ENCODE measurements at regions of chr7 and their contacts with region 1.

Region 1: GRCh38 chr7:66591799-66592596 is 36.7 kb upstream of the KCTD7 start:
- DNase-seq: peak; percentile 86
- H3K4me3 ChIP-seq: peak overlapping the region; percentile 59 to 90 (median 79)
- H3K27ac ChIP-seq: peak overlapping the region; percentile 83
- H3K4me1 ChIP-seq: no peaks in the 10 kb centered on the region
- H3K27me3 ChIP-seq: no peaks in the 10 kb centered on the region
- CTCF ChIP-seq: no peak
- POLR2A ChIP-seq: peak; percentile 90

Region 2: DNA sequence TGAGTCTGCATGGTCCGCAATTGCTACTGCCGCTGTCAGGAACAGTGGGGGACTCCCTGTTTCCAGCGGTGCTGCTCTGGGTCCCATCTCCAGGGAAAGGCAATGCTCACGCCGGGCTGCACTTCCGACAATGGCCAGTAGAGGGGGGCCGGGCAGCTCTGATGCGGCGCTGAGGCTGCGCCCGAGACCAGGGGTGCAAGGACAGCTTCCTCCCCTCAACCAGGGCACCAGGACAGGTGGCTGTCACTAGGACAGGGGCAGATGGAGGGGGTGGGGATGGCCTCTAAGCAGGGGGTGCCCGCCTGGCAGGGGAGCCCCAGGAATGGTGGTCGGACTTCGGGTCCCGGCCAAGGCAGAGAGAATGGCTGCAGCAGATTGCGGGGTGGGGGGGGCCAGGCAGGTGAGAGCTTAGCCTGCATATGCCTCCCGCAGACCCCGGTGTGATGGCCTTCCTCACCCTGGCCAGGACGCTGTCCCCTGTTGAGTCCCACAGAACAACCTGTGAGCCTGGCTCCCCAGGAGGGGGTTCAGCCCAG is 34.3 kb before region 1 on chr7:
- CTCF ChIA-PET with region 1: no interaction called
- POLR2A ChIA-PET with region 1: no interaction called
- dilution Hi-C with region 1: no loop called
- intact Hi-C with region 1: no loop called
- DNase-seq: peak; percentile 32
- H3K4me3 ChIP-seq: no peak overlapping the region
- H3K27ac ChIP-seq: no peak overlapping the region
- H3K4me1 ChIP-seq: no peaks in the 10 kb centered on the region
- H3K27me3 ChIP-seq: no peaks in the 10 kb centered on the region
- CTCF ChIP-seq: peak; percentile 82 to 96
- POLR2A ChIP-seq: no peak

Region 3: GRCh38 chr7:66576646-66577045 is 15.4 kb before region 1 on chr7:
- CTCF ChIA-PET with region 1: no interaction called
- POLR2A ChIA-PET with region 1: no interaction called
- dilution Hi-C with region 1: no loop called
- intact Hi-C with region 1: no loop called
- DNase-seq: no peak
- H3K4me3 ChIP-seq: no peak overlapping the region
- H3K27ac ChIP-seq: no peak overlapping the region
- H3K4me1 ChIP-seq: no peaks in the 10 kb centered on the region
- H3K27me3 ChIP-seq: no peaks in the 10 kb centered on the region
- CTCF ChIP-seq: no peak
- POLR2A ChIP-seq: no peak

Region 4: DNA sequence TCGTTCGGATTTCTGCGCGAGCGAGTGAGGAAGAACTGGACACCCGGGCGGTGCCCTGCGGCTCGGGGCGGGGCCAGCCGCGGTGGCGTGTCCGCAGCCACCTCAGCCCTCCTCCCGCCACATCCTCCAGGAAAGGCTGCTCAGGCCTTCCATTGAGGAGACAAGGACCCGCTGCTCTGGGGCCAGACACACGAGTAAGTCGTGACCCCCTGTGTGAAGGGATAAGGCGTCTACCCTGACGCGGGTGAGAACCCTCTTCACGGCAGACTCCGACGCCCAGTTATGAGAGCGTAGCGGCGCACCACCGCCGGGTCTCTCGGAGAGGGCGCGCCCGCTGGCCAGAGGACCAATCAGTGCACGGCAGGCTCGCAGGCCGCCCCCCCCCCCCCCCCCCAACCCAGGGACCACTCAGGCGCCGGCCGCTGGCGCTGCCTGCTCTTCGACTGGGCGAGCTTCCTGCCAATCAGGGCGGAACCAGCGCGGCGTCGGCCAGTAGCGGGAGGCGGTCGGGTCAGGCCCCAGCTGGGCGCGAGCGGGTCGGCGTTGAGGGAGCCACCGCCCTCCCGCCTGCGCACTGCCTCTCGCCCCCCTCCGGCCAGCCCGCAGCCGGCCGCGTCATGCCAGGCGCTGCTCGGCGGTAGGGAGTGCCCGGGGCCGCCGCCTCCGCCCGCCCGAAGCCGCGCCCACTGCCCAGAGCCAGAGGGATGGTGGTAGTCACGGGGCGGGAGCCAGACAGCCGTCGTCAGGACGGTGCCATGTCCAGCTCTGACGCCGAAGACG is 36.6 kb after region 1 on chr7 and contains the start of gene KCTD7:
- CTCF ChIA-PET with region 1: no interaction called
- POLR2A ChIA-PET with region 1: interaction called, 3 read pairs
- dilution Hi-C with region 1: no loop called
- intact Hi-C with region 1: loop called (anchors 1 kb)
- DNase-seq: peak; percentile 99
- H3K4me3 ChIP-seq: peak within 1 kb of the TSS; percentile 70 to 90 (median 71)
- H3K27ac ChIP-seq: peak within 1 kb of the TSS; percentile 64
- H3K4me1 ChIP-seq: peaks cover 5% of the 10 kb centered on the region
- H3K27me3 ChIP-seq: no peaks in the 10 kb centered on the region
- CTCF ChIP-seq: no peak
- POLR2A ChIP-seq: peak; percentile 91
- total RNA-seq, gene KCTD7: 8.7 and 11.3 TPM in 2 replicates

Region 5: DNA sequence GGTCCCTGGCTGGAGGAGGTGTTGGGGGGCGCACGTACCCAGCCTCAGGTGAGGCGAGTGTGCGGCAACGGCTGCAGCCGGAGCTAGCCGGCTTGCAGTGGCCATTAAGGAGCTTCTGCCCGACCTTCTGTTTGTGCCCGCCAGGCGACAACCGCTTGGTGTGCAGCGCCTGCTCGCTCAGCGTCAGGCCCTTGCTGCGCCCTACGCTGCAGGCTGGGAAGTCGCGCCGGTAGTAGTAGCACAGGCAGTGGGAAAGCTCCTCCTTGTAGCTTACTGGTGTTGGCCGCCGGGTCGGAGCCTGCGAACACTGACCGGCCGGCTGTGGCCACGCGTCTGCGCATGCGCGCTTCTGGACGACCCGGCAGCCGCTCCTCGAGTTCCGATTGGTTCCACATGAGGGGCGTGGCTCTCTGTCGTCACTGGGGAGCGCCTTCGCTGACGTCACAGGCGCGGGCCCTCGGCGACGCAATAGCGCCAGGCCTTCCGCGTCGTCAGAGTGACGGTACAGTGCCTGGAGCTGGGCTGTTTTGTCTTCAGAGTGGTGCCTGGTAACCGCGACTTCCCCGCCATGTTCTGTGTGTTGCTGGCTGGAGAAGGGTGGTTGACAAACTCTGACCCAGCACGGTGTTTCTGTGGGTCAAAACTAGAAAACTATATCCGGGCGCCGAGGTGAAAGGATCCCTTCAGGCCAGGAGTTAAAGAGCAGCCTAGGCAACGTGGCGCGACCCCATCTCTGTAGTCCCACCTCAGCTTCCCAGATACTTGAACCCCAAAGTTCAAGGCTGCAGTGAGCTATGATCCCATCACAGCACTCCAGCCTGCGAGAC is 252.8 kb after region 1 on chr7:
- CTCF ChIA-PET with region 1: no interaction called
- POLR2A ChIA-PET with region 1: no interaction called
- dilution Hi-C with region 1: no loop called
- intact Hi-C with region 1: no loop called
- DNase-seq: peak; percentile 99
- H3K4me3 ChIP-seq: peak overlapping the region; percentile 24 to 62 (median 59)
- H3K27ac ChIP-seq: peak overlapping the region; percentile 90
- H3K4me1 ChIP-seq: peaks cover 8% of the 10 kb centered on the region
- H3K27me3 ChIP-seq: no peaks in the 10 kb centered on the region
- CTCF ChIP-seq: peak in 1 of 2 donors; percentile 44
- POLR2A ChIP-seq: peak; percentile 92